Activated CD4-positive, alpha-beta memory T cell treated with anti-CD3 and anti-CD28 coated beads for 36 hours (primary cell): ENCODE measurements at regions of chr9 and their contacts with region 1.

Region 1: DNA sequence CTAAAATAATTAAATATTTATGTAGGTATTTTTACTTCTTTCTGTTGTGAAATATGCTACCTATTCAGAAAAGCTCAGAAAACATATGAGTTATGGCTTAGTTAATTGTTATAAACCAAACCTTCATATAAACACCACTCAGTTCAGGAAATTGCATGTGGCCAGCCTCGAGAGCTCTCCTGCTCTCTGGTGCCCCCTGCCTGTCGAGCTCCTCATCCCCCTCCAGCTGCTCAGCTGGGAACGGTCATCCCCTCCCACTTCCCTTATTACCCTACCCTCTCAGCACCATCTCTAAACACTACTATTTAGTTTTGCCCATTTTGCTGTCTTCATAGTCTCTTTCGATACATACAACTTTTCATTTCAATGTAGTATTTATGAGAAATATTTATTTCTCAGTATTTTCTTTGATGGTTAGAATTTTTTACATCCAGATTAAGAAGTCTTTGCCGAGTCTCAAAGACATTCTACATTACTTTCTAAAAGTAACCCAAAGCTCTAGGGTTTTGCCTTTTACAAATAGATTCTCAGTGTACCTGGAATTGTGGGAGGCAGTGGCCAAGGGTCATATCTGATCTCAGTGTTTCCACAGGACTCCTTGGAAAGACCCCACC is 51.2 kb upstream of the SEMA4D start:
- DNase-seq: peak; percentile 92
- H3K4me3 Mint-ChIP-seq: no peak overlapping the region
- H3K27ac Mint-ChIP-seq: peak overlapping the region; percentile 67
- H3K4me1 Mint-ChIP-seq: peaks cover 19% of the 10 kb centered on the region
- H3K27me3 Mint-ChIP-seq: no peaks in the 10 kb centered on the region

Region 2: DNA sequence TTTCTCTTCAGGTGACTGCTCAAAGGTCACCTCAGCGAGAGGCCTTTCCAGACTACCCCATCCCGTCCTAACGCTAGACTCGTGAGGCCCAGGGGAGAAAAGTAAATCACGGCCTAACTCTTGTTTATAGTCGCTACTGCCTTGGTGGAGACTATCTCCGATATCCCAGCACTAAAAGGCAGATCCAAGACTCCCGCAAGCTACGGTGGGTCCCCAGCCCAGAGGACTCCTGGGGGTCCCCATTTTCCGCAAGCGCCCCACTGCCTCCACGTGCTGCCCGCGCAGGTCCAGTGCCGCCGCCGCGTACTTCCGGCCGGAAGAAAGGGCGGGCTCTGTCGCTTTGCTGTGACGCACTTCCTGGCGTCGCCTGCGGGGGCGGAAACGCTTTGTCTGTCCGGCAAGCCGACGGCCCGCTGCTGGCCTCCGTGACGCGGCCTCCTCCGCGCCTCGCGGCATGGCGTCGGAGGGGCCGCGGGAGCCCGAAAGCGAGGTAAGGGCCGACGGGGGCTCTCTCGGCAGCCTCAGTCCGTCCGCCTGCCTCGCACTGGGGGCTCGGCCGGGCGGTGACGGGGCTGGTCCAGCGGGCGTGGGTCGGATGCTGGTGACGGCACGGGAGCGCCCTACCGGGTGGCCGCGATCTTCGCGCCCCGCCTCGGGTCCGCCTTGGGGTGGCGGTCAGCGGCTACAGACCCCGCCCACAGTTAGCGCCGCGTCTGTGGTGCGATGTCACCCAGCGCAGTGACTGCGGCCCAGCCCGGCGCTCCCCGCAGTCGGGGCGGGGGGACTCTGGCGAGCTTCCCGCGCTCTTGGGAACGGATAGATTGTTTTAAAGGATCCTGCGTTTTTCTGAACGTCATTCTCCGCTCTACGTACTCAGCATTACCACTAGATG is 230.8 kb before region 1 on chr9 and contains the start of gene SECISBP2:
- CTCF ChIA-PET with region 1: interaction called, 22 read pairs
- POLR2A ChIA-PET with region 1: interaction called, 4 read pairs
- intact Hi-C with region 1: loop called (anchors 1 kb)
- DNase-seq: peak; percentile 96
- H3K4me3 Mint-ChIP-seq: peak within 1 kb of the TSS; percentile 85
- H3K27ac Mint-ChIP-seq: peak within 1 kb of the TSS; percentile 97
- H3K4me1 Mint-ChIP-seq: peaks cover 75% of the 10 kb centered on the region
- H3K27me3 Mint-ChIP-seq: no peaks in the 10 kb centered on the region
- total RNA-seq, gene SECISBP2: 34.0 to 34.7 TPM

Region 3: GRCh38 chr9:89418882-89419640 is 130.1 kb before region 1 on chr9:
- CTCF ChIA-PET with region 1: interaction called, 18 read pairs
- POLR2A ChIA-PET with region 1: interaction called, 3 read pairs
- intact Hi-C with region 1: no loop called
- DNase-seq: peak; percentile 87
- H3K4me3 Mint-ChIP-seq: peak overlapping the region; percentile 58
- H3K27ac Mint-ChIP-seq: peak overlapping the region; percentile 100
- H3K4me1 Mint-ChIP-seq: peaks cover 92% of the 10 kb centered on the region
- H3K27me3 Mint-ChIP-seq: no peaks in the 10 kb centered on the region

Region 4: DNA sequence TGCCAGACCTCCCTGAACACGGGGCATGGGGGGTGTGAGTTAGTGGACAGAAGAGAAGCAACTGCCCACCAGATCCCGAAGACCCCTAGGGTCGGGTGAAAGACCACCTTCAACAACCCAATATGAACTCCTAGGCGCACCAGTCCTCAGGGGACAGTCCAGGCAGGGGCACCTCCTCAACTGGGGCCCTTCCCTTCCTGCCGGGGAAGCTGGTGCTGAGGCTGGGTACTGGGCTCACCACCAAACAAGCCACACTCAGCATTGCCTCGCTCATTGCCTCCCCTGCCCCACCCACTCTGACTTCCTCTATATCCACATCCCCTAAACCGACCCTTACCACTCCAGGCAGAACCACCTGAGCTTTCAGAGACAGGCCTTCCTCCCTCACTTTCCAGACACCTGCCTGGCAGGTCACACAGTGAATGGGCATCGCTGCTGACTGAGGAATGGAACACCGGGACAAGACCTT is 93.7 kb before region 1 on chr9:
- CTCF ChIA-PET with region 1: interaction called, 29 read pairs
- POLR2A ChIA-PET with region 1: no interaction called
- intact Hi-C with region 1: no loop called
- DNase-seq: peak; percentile 58
- H3K4me3 Mint-ChIP-seq: peak overlapping the region; percentile 2
- H3K27ac Mint-ChIP-seq: peak overlapping the region; percentile 88
- H3K4me1 Mint-ChIP-seq: peaks cover 90% of the 10 kb centered on the region
- H3K27me3 Mint-ChIP-seq: no peaks in the 10 kb centered on the region

Region 5: GRCh38 chr9:89483592-89484522 is 65.3 kb before region 1 on chr9:
- CTCF ChIA-PET with region 1: interaction called, 28 read pairs
- POLR2A ChIA-PET with region 1: interaction called, 3 read pairs
- intact Hi-C with region 1: no loop called
- DNase-seq: peak; percentile 74
- H3K4me3 Mint-ChIP-seq: peak overlapping the region; percentile 87
- H3K27ac Mint-ChIP-seq: peak overlapping the region; percentile 90
- H3K4me1 Mint-ChIP-seq: peaks cover 89% of the 10 kb centered on the region
- H3K27me3 Mint-ChIP-seq: no peaks in the 10 kb centered on the region

Region 6: DNA sequence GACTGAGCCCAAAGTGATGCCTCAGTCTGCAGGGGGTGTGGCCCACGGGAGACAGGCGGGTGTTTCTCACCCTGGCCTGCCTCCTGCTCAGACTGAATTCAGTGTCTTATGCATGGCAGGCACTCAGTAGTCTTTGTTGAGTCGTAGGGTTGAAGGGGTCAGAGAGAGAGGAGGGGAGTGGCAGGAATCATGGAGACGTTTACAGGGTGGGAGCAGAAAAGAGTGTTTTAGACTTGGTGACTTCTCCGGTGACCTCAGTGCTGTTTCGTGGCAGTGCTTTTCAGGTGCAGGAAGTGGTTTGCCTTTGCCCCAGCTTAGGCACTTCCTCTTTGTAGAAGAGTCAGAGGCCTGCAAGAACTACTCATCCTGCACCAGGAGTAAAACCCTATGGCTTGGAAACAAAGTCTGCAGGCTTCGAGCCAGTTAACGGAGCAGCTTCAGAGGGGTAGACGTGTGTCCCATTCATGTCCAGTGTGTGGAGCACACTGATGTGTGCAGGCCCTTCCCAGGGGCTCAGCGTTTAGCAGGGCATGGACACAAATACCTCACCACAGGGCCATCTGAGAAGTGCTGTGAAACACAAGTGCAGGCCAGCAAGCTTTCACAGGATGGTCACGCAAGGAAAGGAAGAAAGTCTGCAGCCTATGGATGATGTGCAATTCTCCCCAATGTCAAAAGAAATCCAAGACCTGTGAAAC is 26.7 kb before region 1 on chr9:
- CTCF ChIA-PET with region 1: interaction called, 35 read pairs
- POLR2A ChIA-PET with region 1: interaction called, 4 read pairs
- intact Hi-C with region 1: loop called (anchors 1 kb)
- DNase-seq: peak; percentile 89
- H3K4me3 Mint-ChIP-seq: peak overlapping the region; percentile 58
- H3K27ac Mint-ChIP-seq: peak overlapping the region; percentile 92
- H3K4me1 Mint-ChIP-seq: peaks cover 89% of the 10 kb centered on the region
- H3K27me3 Mint-ChIP-seq: no peaks in the 10 kb centered on the region

Region 7: DNA sequence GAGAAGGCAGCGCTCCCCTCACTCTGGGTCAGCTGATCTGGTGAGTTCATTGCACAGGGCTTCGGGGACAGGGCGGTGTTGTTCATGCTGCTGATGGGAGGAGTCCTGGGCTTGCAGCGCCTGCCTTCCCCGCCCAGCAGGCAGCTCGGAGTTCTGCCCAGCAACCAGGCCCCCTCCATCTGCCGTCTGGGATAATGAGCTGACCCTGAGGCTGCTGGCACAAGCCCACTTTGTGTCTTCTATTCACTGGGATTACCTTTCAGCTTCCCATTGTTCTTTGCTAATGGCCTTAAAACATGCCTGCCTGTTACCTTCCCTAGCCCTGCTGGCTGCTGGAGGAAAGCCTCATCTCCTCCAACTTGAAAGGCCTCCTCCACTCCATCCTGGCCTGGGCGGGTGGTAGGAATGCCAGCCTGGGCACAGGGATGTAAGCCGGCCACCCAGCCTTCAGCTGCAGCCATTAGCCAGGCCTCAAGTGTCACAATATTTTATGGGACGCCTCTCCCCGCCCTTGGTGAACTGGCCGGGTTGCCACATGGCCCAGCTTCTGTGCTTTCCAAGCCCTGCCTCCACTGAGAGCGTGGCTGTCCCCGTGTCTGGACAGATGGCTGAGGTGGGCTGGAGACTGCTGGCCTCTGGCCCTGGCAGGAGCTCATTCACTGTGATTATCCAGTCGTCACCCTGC is 126.1 kb after region 1 on chr9:
- CTCF ChIA-PET with region 1: no interaction called
- POLR2A ChIA-PET with region 1: no interaction called
- intact Hi-C with region 1: no loop called
- DNase-seq: no peak
- H3K4me3 Mint-ChIP-seq: no peak overlapping the region
- H3K27ac Mint-ChIP-seq: no peak overlapping the region
- H3K4me1 Mint-ChIP-seq: no peaks in the 10 kb centered on the region
- H3K27me3 Mint-ChIP-seq: no peaks in the 10 kb centered on the region